ENCODE measurements at regions of chr22 and their contacts with region 1.

Region 1: GRCh38 chr22:23047265-23047664 is 23.1 kb upstream of the GNAZ start:
- DNase-seq: peak in 1 of 2 donors; percentile 32
- ATAC-seq: no peak
- H3K4me3 ChIP-seq: no peak overlapping the region
- H3K27ac ChIP-seq: no peak overlapping the region
- H3K4me1 ChIP-seq: no peaks in the 10 kb centered on the region
- H3K27me3 ChIP-seq: peaks cover 0 to 3% of the 10 kb centered on the region in 2 donors

Region 2: GRCh38 chr22:22981670-22982571 is 65.3 kb before region 1 on chr22:
- intact Hi-C with region 1: loop called in 1 of 2 experiments (anchors 10 kb)
- DNase-seq: no peak
- ATAC-seq: no peak
- H3K4me3 ChIP-seq: no peak overlapping the region
- H3K27ac ChIP-seq: no peak overlapping the region
- H3K4me1 ChIP-seq: no peaks in the 10 kb centered on the region
- H3K27me3 ChIP-seq: no peaks in the 10 kb centered on the region

Region 3: DNA sequence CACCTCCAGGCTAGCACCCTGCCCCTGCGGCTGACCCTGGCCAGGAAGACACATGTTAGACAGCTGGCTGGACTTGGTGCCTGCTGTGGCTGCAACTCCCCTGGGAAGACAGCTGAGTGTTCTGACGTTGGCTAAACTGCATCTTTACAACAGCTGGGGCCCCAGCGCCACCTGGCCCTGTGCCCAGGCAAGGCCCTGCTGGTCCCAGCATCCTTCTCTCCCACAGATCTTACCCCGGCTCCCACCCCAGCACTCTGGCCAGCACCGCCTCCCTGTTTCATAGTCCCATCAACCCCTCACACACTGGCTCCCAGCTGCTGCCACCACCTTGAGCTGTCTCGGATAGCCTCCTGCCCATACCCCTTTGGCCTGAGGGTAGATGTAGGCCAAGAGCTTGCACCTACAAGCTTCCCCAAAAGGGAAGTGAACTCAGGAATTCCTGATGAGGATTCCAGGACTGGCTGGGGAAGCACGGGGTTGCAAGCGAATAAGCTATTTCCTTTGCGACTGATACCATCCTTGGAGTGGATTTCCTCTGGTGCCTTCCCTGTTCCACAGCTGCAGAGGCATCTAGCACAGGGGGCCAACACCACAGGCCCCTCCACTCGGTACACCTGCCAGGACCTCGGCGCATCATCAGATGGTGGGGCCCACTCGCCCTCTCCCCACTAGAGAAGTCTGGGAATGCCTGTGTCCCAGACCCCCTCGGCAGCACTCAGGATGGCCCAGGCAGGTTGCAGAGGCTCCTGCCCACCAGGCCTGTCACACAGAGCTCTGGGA is 66.0 kb after region 1 on chr22:
- intact Hi-C with region 1: no loop called
- DNase-seq: no peak
- ATAC-seq: no peak
- H3K4me3 ChIP-seq: no peak overlapping the region
- H3K27ac ChIP-seq: no peak overlapping the region
- H3K4me1 ChIP-seq: no peaks in the 10 kb centered on the region
- H3K27me3 ChIP-seq: no peaks in the 10 kb centered on the region